A549 (cell line): ENCODE measurements at regions of chr2 and their contacts with region 1.

Region 1: DNA sequence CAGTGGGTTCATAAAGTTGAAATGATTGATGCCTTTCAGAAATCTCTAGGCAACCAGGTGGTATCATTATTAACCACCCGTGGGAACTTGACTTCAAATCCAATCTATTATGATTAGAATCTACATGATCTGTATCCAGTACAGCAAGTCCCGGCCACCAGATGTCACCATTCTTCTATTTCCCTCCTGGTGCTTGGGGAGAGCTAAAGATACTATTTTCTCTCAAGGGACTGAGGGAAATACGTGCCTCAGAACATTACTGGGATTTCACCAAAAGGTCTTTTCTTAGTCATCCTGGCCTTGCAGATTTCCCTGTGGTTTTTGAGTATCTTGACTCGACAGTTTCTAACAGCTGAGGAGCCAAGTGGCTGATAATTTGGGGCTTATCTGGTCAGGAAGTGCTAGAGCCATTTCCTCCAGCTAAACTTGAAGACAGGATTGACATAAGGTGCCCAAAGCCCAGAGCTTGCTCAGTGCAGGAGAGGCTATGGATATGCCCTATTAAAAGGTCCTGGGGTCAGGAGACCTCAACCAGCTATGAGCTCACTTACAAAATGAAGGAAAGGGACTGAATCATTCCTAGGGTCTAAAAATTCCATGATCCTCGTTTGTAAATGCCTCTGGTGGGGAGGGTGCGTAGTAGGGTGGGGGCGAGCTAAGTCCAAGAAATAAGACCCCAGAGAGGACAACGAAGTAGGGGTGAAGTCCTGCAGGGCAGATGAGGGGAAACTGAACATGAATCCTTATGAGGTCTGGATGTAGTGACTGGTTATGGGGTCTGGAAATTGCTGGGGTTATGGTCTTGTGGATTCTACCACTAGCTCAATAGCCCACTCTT is 135.4 kb upstream of the MGAT5 start:
- DNase-seq: peak; percentile 69 to 90
- ATAC-seq: peak; percentile 41 to 76
- H3K4me3 ChIP-seq: no peak overlapping the region
- H3K27ac ChIP-seq: peak overlapping the region; percentile 2 to 19; a peak in 1 of 6 replicates
- H3K4me1 ChIP-seq: peaks cover 19% of the 10 kb centered on the region
- CTCF ChIP-seq: peak; percentile 87
- EP300 ChIP-seq: no peak
- POLR2A ChIP-seq: no peak
- RAD21 ChIP-seq: peak; percentile 91 to 92

Region 2: GRCh38 chr2:133844214-133844892 is 274.1 kb before region 1 on chr2:
- CTCF ChIA-PET with region 1: no interaction called
- POLR2A ChIA-PET with region 1: no interaction called
- DNase-seq: peak; percentile 62 to 64
- ATAC-seq: peak; percentile 85 to 93
- H3K4me3 ChIP-seq: no peak overlapping the region
- H3K27ac ChIP-seq: peak overlapping the region; percentile 36 to 78; a peak in 5 of 6 replicates
- H3K4me1 ChIP-seq: peaks cover 18% of the 10 kb centered on the region; the same call in 1 of the 3 replicates
- CTCF ChIP-seq: peak; percentile 90
- EP300 ChIP-seq: no peak
- POLR2A ChIP-seq: no peak
- RAD21 ChIP-seq: peak; percentile 95 to 98

Region 3: DNA sequence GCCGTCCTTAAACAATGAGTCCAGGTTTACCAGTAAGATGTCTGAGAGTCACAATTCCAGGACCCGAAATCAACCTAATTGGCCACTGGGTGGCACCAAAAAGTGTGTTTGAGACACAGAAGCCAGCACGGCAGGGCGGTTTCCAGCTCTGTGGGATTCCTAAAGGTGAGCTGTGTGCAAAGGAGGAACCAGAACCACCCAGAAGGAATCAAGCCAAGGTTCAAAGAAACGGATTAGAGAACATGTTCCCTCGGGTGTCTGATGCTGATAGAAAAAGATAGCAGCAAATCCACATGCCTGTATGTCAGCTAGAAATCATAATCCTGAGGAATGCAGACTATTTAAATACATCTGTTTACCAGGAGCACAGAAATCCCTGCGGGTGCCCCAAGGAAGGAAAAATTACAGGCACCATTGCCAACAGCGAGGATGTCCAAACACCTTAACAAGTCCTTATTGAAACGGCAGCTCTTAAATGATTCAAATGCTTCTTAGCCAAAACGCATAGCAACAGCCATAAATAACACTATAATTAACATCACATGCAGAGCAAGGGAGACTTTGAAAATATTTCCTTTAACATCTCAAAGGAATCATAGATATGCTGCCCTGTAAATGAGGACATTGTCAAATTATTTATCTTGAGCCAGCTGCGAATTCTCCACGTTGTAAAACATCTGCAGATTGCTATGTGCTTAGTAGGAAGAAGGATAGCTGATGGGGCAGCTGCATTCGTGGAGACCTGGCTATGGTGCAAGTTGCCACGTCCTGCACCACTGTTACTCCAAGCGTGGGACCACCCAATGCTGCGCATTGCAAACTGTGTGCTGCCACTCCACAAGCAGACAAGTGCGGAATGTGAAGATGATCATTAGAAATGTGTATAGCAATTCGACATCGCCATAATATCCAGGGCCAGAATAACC is 231.5 kb before region 1 on chr2:
- CTCF ChIA-PET with region 1: interaction called, 19 read pairs
- POLR2A ChIA-PET with region 1: no interaction called
- DNase-seq: peak; percentile 70 to 71
- ATAC-seq: peak; percentile 88 to 94
- H3K4me3 ChIP-seq: no peak overlapping the region
- H3K27ac ChIP-seq: no peak overlapping the region
- H3K4me1 ChIP-seq: peaks cover 4% of the 10 kb centered on the region; the same call in 1 of the 3 replicates
- CTCF ChIP-seq: peak; percentile 68
- EP300 ChIP-seq: no peak
- POLR2A ChIP-seq: no peak
- RAD21 ChIP-seq: peak; percentile 69 to 72

Region 4: GRCh38 chr2:134216152-134216829 is 97.8 kb after region 1 on chr2:
- CTCF ChIA-PET with region 1: interaction called, 22 read pairs
- POLR2A ChIA-PET with region 1: no interaction called
- DNase-seq: no peak
- ATAC-seq: no peak
- H3K4me3 ChIP-seq: no peak overlapping the region
- H3K27ac ChIP-seq: no peak overlapping the region
- H3K4me1 ChIP-seq: no peaks in the 10 kb centered on the region
- CTCF ChIP-seq: no peak
- EP300 ChIP-seq: no peak
- POLR2A ChIP-seq: no peak
- RAD21 ChIP-seq: no peak

Region 5: DNA sequence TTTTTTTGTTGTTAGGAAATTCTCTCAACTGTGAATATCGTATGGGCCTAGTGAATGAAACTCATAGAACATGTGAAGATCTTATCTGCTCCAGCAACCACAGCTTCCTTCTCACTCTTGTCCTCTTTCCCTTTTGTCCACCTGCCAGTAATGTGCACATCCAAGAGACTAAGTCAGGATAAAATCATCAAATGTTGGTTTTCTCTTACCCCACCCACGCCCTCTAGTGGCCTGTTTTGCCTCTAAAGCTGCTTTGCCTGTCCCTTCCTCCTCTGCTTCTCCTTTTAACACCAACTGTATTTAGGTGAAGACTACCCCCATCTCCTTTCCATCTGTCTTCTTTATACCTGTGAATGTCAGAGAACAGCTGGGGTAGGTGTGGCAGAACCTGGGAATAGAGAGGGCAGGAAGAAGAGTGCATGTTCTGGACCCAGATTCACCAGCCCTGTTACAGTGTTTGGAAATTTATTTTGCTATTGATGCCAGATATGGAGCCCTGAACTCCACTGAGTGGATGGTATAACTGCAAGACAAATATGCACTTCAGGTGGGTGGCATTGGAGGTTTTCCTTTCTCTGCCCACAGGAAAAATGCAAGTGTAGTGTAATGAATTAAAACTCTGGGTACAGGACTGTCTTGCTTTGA is 127.0 kb after region 1 on chr2:
- CTCF ChIA-PET with region 1: interaction called, 76 read pairs
- POLR2A ChIA-PET with region 1: no interaction called
- DNase-seq: peak; percentile 12 to 62
- ATAC-seq: peak; percentile 86 to 91
- H3K4me3 ChIP-seq: no peak overlapping the region
- H3K27ac ChIP-seq: no peak overlapping the region
- H3K4me1 ChIP-seq: no peaks in the 10 kb centered on the region
- CTCF ChIP-seq: peak; percentile 83
- EP300 ChIP-seq: no peak
- POLR2A ChIP-seq: no peak
- RAD21 ChIP-seq: peak; percentile 65 to 71

Region 6: DNA sequence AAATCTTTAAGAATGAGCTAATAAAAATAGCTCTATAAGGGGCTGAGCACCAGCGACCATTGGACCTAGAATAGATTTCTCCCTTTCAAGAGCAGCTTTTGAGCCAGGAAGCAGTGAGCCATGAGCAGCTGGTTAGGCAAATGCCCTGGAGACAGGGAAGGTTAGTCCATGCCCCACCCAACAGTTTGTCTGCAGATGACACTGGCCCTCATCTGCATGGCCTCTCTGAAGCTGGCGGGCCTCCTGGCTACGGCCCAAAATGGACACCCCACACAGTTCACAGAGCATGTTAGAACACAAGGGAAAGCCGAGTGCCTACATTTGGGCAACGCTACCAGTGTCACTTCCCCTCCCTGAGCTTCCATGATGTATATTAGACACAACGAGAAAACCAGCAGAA is 336.4 kb after region 1 on chr2:
- CTCF ChIA-PET with region 1: interaction called, 45 read pairs
- POLR2A ChIA-PET with region 1: no interaction called
- DNase-seq: no peak
- ATAC-seq: no peak
- H3K4me3 ChIP-seq: no peak overlapping the region
- H3K27ac ChIP-seq: no peak overlapping the region
- H3K4me1 ChIP-seq: no peaks in the 10 kb centered on the region
- CTCF ChIP-seq: no peak
- EP300 ChIP-seq: no peak
- POLR2A ChIP-seq: no peak
- RAD21 ChIP-seq: no peak